Activated B cell treated with CpG ODN at 0.5 μM for 24 hours (primary cell): ENCODE measurements at regions of chr7 and their contacts with region 1.

Region 1: GRCh38 chr7:44999245-45000095 is 531 bp upstream of the CCM2 start:
- DNase-seq: peak; percentile 94
- ATAC-seq: peak; percentile 85
- H3K4me3 Mint-ChIP-seq: peak overlapping the region; percentile 95
- H3K27ac Mint-ChIP-seq: peak overlapping the region; percentile 94
- H3K4me1 Mint-ChIP-seq: peaks cover 60% of the 10 kb centered on the region
- H3K27me3 Mint-ChIP-seq: no peaks in the 10 kb centered on the region
- CTCF ChIP-seq: no peak

Region 2: GRCh38 chr7:44353668-44354067 is 645.8 kb before region 1 on chr7:
- CTCF ChIA-PET with region 1: no interaction called
- POLR2A ChIA-PET with region 1: no interaction called
- intact Hi-C with region 1: no loop called
- DNase-seq: no peak
- ATAC-seq: no peak
- H3K4me3 Mint-ChIP-seq: no peak overlapping the region
- H3K27ac Mint-ChIP-seq: no peak overlapping the region
- H3K4me1 Mint-ChIP-seq: no peaks in the 10 kb centered on the region
- H3K27me3 Mint-ChIP-seq: peaks cover 32% of the 10 kb centered on the region
- CTCF ChIP-seq: no peak

Region 3: GRCh38 chr7:44581879-44582603 is 417.4 kb before region 1 on chr7 and contains the start of gene TMED4:
- CTCF ChIA-PET with region 1: no interaction called
- POLR2A ChIA-PET with region 1: interaction called, 6 read pairs
- intact Hi-C with region 1: loop called (anchors 1 kb)
- DNase-seq: peak; percentile 100
- ATAC-seq: peak; percentile 90
- H3K4me3 Mint-ChIP-seq: peak within 1 kb of the TSS; percentile 90
- H3K27ac Mint-ChIP-seq: peak within 1 kb of the TSS; percentile 95
- H3K4me1 Mint-ChIP-seq: peaks cover 29% of the 10 kb centered on the region
- H3K27me3 Mint-ChIP-seq: peaks cover 2% of the 10 kb centered on the region
- CTCF ChIP-seq: no peak
- total RNA-seq, gene TMED4: 61.7 and 70.1 TPM in 2 replicates

Region 4: GRCh38 chr7:44980393-44981034 is 19.0 kb before region 1 on chr7:
- CTCF ChIA-PET with region 1: interaction called, 8 read pairs
- POLR2A ChIA-PET with region 1: interaction called, 325 read pairs
- intact Hi-C with region 1: loop called (anchors 1 kb)
- DNase-seq: peak; percentile 56
- ATAC-seq: peak; percentile 63
- H3K4me3 Mint-ChIP-seq: peak overlapping the region; percentile 74
- H3K27ac Mint-ChIP-seq: peak overlapping the region; percentile 92
- H3K4me1 Mint-ChIP-seq: peaks cover 86% of the 10 kb centered on the region
- H3K27me3 Mint-ChIP-seq: no peaks in the 10 kb centered on the region
- CTCF ChIP-seq: no peak

Region 5: GRCh38 chr7:45021604-45022296 is 22.3 kb after region 1 on chr7:
- CTCF ChIA-PET with region 1: interaction called, 15 read pairs
- POLR2A ChIA-PET with region 1: interaction called, 129 read pairs
- intact Hi-C with region 1: loop called (anchors 1 kb)
- DNase-seq: no peak
- ATAC-seq: peak; percentile 79
- H3K4me3 Mint-ChIP-seq: peak overlapping the region; percentile 13
- H3K27ac Mint-ChIP-seq: peak overlapping the region; percentile 82
- H3K4me1 Mint-ChIP-seq: peaks cover 53% of the 10 kb centered on the region
- H3K27me3 Mint-ChIP-seq: no peaks in the 10 kb centered on the region
- CTCF ChIP-seq: no peak

Region 6: GRCh38 chr7:45033261-45033930 is 33.9 kb after region 1 on chr7:
- CTCF ChIA-PET with region 1: interaction called, 15 read pairs
- POLR2A ChIA-PET with region 1: interaction called, 129 read pairs
- intact Hi-C with region 1: no loop called
- DNase-seq: no peak
- ATAC-seq: no peak
- H3K4me3 Mint-ChIP-seq: no peak overlapping the region
- H3K27ac Mint-ChIP-seq: peak overlapping the region; percentile 71
- H3K4me1 Mint-ChIP-seq: peaks cover 78% of the 10 kb centered on the region
- H3K27me3 Mint-ChIP-seq: no peaks in the 10 kb centered on the region
- CTCF ChIP-seq: no peak

Region 7: DNA sequence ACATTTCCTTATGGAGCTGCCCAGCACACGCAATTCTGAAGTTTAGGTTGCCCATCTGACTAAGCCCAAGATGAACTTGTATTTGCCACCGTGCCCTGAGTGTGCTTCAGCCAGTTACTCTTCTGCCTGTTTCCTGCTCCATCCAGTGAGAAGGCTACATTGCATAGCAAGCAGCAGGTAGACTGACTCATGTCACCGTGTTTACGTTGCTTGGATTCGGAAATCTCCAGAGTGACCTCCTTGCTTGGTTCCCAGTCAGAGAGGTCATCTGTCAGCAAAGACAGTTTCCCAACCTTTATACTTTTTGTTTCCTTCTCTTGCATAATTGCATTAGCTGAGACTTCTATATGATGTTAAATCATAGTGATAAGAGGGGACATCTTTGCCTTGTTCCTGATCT is 58.4 kb after region 1 on chr7:
- CTCF ChIA-PET with region 1: no interaction called
- POLR2A ChIA-PET with region 1: interaction called, 4 read pairs
- intact Hi-C with region 1: loop called (anchors 5 kb)
- DNase-seq: no peak
- ATAC-seq: no peak
- H3K4me3 Mint-ChIP-seq: no peak overlapping the region
- H3K27ac Mint-ChIP-seq: no peak overlapping the region
- H3K4me1 Mint-ChIP-seq: peaks cover 63% of the 10 kb centered on the region
- H3K27me3 Mint-ChIP-seq: no peaks in the 10 kb centered on the region
- CTCF ChIP-seq: no peak